ENCODE measurements at regions of chr5 and their contacts with region 1.

Region 1: GRCh38 chr5:53095931-53096525 is 13.5 kb downstream of the MOCS2 start:
- DNase-seq: peak; percentile 27 to 73
- H3K4me3 ChIP-seq: no peak overlapping the region
- H3K27ac ChIP-seq: no peak overlapping the region
- H3K4me1 ChIP-seq: no peaks in the 10 kb centered on the region
- H3K27me3 ChIP-seq: no peaks in the 10 kb centered on the region
- CTCF ChIP-seq: peak in 2 of 3 experiments; percentile 59 to 73; a peak in 3 of 4 replicates
- EP300 ChIP-seq: no peak
- POLR2A ChIP-seq: no peak
- RAD21 ChIP-seq: peak; percentile 60 to 67

Region 2: DNA sequence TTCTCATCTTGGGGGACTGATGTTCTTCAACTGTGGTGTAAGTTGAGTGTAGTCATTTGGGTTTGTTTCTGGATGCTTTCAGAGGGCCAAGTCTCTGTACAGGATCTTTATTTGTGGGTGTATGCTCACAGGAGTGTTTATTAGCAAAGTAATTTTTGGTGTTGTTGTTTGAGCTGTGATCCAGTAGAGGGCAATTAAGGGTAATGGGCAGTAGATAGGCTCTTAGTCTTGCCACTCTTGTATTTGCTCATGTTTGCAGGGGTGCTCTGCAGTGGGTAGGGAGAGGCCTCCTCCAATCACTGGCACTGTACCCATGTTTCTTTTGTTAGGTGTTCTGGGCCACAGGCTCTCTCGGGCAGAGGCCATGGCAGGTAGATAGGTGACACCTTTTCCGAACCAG is 152.7 kb before region 1 on chr5:
- CTCF ChIA-PET with region 1: interaction called, 72 read pairs
- POLR2A ChIA-PET with region 1: no interaction called
- DNase-seq: no peak
- H3K4me3 ChIP-seq: no peak overlapping the region
- H3K27ac ChIP-seq: no peak overlapping the region
- H3K4me1 ChIP-seq: no peaks in the 10 kb centered on the region
- H3K27me3 ChIP-seq: no peaks in the 10 kb centered on the region
- CTCF ChIP-seq: peak in 1 of 3 experiments; percentile 4; a peak in 2 of 4 replicates
- EP300 ChIP-seq: no peak
- POLR2A ChIP-seq: no peak
- RAD21 ChIP-seq: no peak